Ascending aorta (tissue), 2 donors: ENCODE measurements at regions of chr2 and their contacts with region 1.

Region 1: DNA sequence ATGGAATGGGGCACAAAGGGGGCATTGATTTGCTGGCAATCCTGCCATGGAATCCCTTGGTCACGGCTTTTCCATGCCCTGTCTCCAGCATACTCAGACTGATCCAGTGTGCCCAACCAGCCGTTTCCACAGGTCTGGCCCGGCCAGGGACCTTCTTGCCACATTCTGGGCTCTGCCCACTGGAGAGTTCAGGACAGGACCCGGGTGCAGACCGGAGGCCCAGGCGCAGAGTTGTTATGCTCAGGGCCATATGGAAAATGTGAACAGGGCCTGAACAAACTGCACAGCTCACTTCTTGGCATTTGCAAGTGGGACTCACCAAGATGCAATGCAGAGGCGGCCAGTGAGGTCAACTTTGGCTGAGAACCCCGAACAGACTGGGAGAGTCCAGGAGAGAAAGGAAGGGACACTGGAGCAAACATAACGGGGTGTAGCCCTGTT is 15.6 kb upstream of the ASAP2 start:
- DNase-seq: peak; percentile 84 to 99
- H3K4me3 ChIP-seq: peak overlapping the region in 1 of 2 donors; percentile 10
- H3K27ac ChIP-seq: peak overlapping the region; percentile 85 to 86
- H3K4me1 ChIP-seq: peaks cover 13 to 60% of the 10 kb centered on the region in 2 donors
- H3K27me3 ChIP-seq: no peaks in the 10 kb centered on the region
- CTCF ChIP-seq: no peak

Region 2: GRCh38 chr2:9165625-9166024 is 25.4 kb before region 1 on chr2:
- intact Hi-C with region 1: loop called (anchors 1 kb)
- DNase-seq: no peak
- H3K4me3 ChIP-seq: no peak overlapping the region
- H3K27ac ChIP-seq: peak overlapping the region; percentile 41 to 81
- H3K4me1 ChIP-seq: peaks cover 13 to 18% of the 10 kb centered on the region in 2 donors
- H3K27me3 ChIP-seq: no peaks in the 10 kb centered on the region
- CTCF ChIP-seq: no peak

Region 3: DNA sequence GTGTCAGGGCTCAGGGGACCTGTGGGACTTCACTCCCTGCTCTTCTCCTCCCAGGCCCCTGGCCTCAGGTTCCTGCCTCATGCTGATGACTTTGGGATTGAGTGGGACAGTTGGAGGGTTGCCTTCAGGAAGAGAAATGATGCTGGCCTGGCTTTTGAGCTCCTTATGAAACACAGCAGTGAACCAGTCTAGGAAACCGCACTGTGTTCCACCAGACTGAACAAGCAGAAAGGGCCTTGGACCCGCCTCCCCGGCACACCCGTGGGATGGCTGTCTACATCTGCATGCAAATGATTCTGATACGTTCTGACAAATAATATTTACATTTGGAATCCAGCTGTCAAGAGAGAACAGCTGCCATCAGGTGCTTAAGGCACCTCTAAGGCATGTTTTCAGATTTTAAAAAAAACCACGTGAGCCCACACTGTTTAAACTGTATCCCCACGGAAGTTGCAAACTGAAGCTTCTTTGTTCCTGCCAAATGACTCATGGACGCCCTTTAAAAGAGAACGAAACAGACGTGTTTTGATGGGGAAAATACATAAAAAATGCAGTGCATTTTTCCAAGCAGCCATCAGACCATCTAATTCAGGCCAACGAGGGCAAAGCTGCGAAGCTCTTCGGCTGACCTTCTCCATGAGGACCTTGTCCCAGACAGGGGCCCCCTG is 12.0 kb before region 1 on chr2:
- intact Hi-C with region 1: loop called (anchors 1 kb)
- DNase-seq: peak; percentile 44 to 91
- H3K4me3 ChIP-seq: peak overlapping the region in 1 of 2 donors; percentile 23
- H3K27ac ChIP-seq: peak overlapping the region; percentile 91 to 96
- H3K4me1 ChIP-seq: peaks cover 11 to 28% of the 10 kb centered on the region in 2 donors
- H3K27me3 ChIP-seq: no peaks in the 10 kb centered on the region
- CTCF ChIP-seq: no peak

Region 4: GRCh38 chr2:9217838-9218770 is 27.0 kb after region 1 on chr2:
- intact Hi-C with region 1: no loop called
- DNase-seq: peak in 1 of 2 donors; percentile 59
- H3K4me3 ChIP-seq: no peak overlapping the region
- H3K27ac ChIP-seq: peak overlapping the region; percentile 37 to 38
- H3K4me1 ChIP-seq: peaks cover 6 to 61% of the 10 kb centered on the region in 2 donors
- H3K27me3 ChIP-seq: no peaks in the 10 kb centered on the region
- CTCF ChIP-seq: no peak